ENCODE measurements at regions of chr2 and their contacts with region 1.

Region 1: DNA sequence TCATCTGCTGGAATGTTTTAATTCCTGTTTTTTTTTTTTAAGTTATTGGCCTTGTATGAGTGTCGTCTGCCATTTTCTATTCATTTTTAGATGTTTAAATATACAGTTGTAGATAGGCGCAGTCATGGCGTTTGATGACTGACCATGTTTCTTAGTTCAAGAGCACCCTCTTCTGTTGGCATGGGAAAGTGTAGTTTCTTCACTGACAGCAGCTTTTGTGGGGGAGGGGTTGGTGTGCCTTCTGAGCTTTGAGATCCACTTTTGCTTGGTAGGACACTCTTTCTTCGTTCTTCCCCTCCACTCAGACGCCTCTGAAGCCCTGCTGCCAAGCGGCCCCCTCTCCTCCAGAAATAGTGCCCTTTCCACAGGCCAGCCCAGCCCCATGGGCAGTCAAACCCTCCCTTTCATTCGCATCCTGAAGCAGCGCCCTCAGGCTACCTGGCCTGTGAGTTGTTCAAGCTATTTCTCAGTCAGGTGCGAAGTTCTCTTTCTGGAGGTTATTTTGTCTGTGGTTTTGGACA is 492.0 kb downstream of the TNS1 start:
- DNase-seq: peak; percentile 69
- ATAC-seq: peak; percentile 98
- H3K4me3 ChIP-seq: no peak overlapping the region
- H3K27ac ChIP-seq: no peak overlapping the region
- H3K4me1 ChIP-seq: no peaks in the 10 kb centered on the region
- H3K27me3 ChIP-seq: no peaks in the 10 kb centered on the region; a peak in 1 of 5 replicates
- CTCF ChIP-seq: peak; percentile 91
- EP300 ChIP-seq: no peak
- POLR2A ChIP-seq: no peak
- RAD21 ChIP-seq: peak; percentile 88

Region 2: GRCh38 chr2:216681683-216682082 is 829.1 kb before region 1 on chr2:
- CTCF ChIA-PET with region 1: interaction called, 20 read pairs
- POLR2A ChIA-PET with region 1: no interaction called
- in situ Hi-C with region 1: no loop called
- intact Hi-C with region 1: loop called (anchors 1 kb)
- DNase-seq: no peak
- ATAC-seq: no peak
- H3K4me3 ChIP-seq: no peak overlapping the region
- H3K27ac ChIP-seq: no peak overlapping the region
- H3K4me1 ChIP-seq: no peaks in the 10 kb centered on the region
- H3K27me3 ChIP-seq: peaks cover 3 to 45% of the 10 kb centered on the region in 2 experiments; a peak in 4 of 5 replicates
- CTCF ChIP-seq: no peak
- EP300 ChIP-seq: no peak
- POLR2A ChIP-seq: no peak
- RAD21 ChIP-seq: no peak

Region 3: DNA sequence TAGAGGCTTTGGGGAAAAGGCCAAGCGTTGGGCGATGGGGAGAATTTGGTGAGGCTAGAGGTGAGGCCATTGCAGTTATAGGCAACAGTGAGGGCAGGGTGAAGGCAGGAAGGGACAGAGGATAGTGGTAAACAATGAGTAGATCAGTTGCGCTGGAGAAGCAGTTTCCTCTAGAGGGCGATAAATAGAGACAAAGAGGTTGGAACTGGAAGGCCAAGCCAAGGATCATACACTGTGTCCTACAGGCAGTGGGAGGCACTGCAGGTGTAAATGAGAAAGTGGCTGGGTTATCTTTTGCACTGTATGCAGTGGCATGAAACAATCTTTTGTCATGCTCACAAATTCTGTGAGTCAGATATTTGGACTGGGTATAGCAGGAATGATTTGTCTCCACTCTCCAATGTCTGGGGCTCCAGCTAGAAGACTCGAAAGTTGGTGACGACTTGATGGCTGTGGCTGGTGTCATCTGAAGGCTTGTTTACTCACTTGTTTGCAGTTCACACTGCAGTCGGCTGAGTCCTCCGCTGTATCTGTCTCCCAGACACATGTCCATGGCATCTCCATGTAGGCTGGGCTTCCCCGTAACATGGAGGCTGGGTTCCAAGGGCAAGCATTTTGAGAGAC is 733.1 kb before region 1 on chr2:
- CTCF ChIA-PET with region 1: interaction called, 8 read pairs
- POLR2A ChIA-PET with region 1: no interaction called
- in situ Hi-C with region 1: no loop called
- intact Hi-C with region 1: loop called (anchors 1 kb)
- DNase-seq: peak; percentile 89
- ATAC-seq: peak; percentile 98
- H3K4me3 ChIP-seq: no peak overlapping the region
- H3K27ac ChIP-seq: no peak overlapping the region
- H3K4me1 ChIP-seq: peaks cover 16% of the 10 kb centered on the region
- H3K27me3 ChIP-seq: peaks cover 0 to 16% of the 10 kb centered on the region in 2 experiments; a peak in 2 of 5 replicates
- CTCF ChIP-seq: peak; percentile 88
- EP300 ChIP-seq: peak in 1 of 2 experiments; percentile 42; a peak in 1 of 4 replicates
- POLR2A ChIP-seq: no peak
- RAD21 ChIP-seq: peak; percentile 87

Region 4: DNA sequence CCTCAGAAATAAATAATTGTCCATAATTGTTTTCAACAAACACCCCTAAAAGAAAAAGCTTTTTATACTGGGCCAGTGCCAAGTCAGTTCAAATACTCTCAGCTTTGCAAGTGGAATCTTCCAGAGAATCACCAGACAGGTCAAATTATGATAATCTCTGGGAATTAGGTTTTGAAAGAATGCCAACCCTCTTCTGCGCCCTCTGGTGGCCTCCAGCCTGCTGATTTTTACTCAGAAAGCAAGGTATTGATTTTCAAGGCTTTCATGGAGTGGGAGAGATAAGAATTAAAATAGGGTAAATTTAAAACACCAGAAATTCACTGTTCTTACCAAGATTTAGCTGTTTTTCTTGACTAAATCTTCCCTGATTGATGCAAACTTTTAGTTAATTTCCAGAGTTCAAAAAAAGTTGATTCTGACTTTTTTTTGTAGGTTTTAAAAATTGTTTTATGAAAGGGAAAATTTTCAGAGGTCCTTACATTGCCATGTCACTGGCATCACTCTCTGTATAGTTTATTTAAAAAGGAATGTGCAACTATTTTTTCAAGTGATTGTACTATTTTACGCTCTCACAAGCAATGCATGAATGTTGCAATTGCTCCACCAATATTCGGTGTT is 368.1 kb before region 1 on chr2:
- CTCF ChIA-PET with region 1: interaction called, 17 read pairs
- POLR2A ChIA-PET with region 1: no interaction called
- in situ Hi-C with region 1: no loop called
- intact Hi-C with region 1: loop called (anchors 1 kb)
- DNase-seq: peak; percentile 38
- ATAC-seq: peak; percentile 64
- H3K4me3 ChIP-seq: no peak overlapping the region
- H3K27ac ChIP-seq: no peak overlapping the region
- H3K4me1 ChIP-seq: no peaks in the 10 kb centered on the region
- H3K27me3 ChIP-seq: 0 out of 5 replicates have a peak, but pooled peaks cover 0 to under 1% of the 10 kb centered on the region in 2 experiments
- CTCF ChIP-seq: peak; percentile 76
- EP300 ChIP-seq: no peak
- POLR2A ChIP-seq: no peak
- RAD21 ChIP-seq: peak; percentile 55; the same call in 1 of the 2 replicates

Region 5: DNA sequence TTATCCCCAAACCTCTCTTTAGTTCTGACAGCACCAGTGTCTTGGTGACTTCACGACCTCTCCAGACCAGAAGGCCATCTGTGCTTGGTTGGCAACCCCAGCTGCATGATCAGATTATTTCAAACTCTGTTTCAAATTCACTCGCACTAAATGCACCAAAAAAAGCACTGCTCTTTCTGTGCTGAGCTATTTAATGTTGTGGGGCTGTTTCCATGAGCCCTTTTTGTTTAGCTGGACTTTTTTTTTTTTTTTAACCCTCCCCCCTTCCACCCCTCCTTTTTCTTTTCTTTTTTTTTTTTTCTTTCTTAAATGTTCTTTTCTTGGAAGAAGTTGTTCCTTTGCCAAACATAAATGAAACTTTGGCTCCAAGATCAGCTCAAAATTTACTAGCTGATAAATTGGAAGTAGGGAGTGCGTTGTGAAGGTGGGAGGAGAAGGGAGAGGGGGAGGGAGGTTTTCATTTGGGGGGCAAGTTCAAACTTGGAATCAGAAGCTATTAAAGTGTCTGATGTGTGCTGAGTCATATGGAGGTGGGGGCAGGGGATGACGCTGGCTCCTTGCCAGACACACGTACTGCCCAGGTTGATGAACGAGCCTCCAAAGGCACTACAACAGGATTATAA is 108.0 kb before region 1 on chr2:
- CTCF ChIA-PET with region 1: no interaction called
- POLR2A ChIA-PET with region 1: no interaction called
- in situ Hi-C with region 1: no loop called
- intact Hi-C with region 1: no loop called
- DNase-seq: no peak
- ATAC-seq: no peak
- H3K4me3 ChIP-seq: no peak overlapping the region
- H3K27ac ChIP-seq: no peak overlapping the region
- H3K4me1 ChIP-seq: no peaks in the 10 kb centered on the region
- H3K27me3 ChIP-seq: no peaks in the 10 kb centered on the region
- CTCF ChIP-seq: no peak
- EP300 ChIP-seq: no peak
- POLR2A ChIP-seq: no peak
- RAD21 ChIP-seq: no peak

Region 6: DNA sequence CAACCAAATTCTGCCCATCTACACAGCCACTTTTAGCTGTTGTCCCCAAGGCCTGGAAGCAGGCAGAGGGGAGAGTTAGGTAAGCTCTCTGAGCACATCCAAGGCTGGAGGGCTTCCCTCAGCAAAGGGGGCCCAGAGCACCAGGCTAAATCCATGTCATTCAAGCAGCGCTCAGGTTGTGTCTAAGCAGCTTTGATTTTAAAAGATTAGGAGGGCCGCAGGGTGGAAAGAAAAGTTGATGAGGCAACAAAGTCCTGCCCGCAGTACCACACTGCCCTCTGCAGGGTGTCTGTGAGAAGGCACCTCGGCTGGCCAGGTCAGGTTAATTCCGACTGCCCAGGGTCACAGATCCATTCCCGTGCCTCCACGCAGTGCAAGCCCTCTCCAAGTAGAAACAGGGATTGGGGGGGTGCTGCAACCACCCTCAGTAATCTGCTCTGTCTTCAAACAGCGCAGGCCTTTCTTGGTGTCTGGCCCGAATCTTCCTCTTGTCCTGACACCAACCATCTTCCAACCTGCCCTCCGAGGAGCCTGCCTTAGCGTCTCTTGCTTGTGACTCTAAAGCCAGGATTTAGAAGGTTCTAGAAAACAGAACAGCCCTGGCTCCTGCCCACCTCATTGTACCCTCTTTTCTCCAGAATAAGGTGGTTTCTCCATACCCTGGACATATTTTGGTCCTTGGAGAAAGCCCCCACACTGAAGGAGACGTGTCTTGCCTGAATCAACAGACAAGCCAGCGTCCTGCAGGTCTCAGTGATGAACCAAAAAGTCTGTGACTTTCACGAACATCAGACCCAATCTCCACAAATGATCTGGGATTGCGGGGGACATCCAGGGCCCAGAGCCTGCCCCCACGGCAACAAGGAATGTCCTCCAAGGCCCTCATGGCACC is 202.8 kb after region 1 on chr2:
- CTCF ChIA-PET with region 1: interaction called, 4 read pairs
- POLR2A ChIA-PET with region 1: no interaction called
- in situ Hi-C with region 1: no loop called
- intact Hi-C with region 1: loop called (anchors 2 kb)
- DNase-seq: peak; percentile 55
- ATAC-seq: peak; percentile 89
- H3K4me3 ChIP-seq: no peak overlapping the region
- H3K27ac ChIP-seq: no peak overlapping the region
- H3K4me1 ChIP-seq: no peaks in the 10 kb centered on the region
- H3K27me3 ChIP-seq: peaks cover 2 to 41% of the 10 kb centered on the region in 2 experiments; a peak in 3 of 5 replicates
- CTCF ChIP-seq: peak; percentile 97
- EP300 ChIP-seq: no peak
- POLR2A ChIP-seq: no peak
- RAD21 ChIP-seq: peak; percentile 93

Measured in HepG2 (cell line).